Heart right ventricle (tissue), 16 donors: ENCODE measurements at regions of chr7 and their contacts with region 1.

Region 1: DNA sequence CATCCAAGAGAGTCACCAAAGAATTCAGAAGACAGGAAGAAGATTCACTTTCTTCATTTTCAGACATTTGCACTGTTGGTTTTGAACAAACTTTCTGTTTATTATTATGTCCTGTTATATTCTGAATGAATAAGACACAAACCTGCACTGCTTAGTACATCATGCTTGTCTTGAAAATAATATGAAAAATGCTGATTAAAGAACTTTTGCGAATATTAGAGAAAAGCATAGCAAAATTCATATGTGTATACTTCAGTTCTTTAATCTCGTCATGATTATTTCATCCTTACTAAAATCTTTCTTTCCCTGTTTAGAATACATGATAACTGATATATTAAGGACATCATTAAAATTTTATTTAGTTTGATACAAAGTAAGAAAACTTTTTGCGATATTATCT is 504.1 kb downstream of the POM121L12 start:
- DNase-seq: no peak
- ATAC-seq: no peak
- H3K4me3 ChIP-seq: no peak overlapping the region
- H3K27ac ChIP-seq: no peak overlapping the region
- H3K4me1 ChIP-seq: no peaks in the 10 kb centered on the region
- H3K27me3 ChIP-seq: no peaks in the 10 kb centered on the region
- CTCF ChIP-seq: no peak

Region 2: DNA sequence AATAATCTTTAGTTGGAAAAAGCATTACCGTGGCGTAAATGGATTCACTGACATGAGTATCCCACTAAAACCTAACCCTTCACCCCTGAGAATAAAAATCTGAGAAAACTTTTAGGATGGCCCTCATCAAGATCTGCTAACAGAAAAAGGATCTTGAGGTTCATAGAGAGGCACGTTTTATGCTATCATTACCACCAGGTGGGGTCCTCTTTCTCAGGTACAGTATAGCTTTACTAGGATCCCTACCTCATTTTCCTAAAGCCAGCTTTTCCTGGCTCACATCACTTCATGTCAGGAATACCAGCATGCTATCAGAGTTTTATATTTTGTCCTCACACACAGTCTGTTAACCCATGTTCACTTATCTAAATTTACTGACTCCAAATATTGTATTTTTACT is 330.4 kb before region 1 on chr7:
- intact Hi-C with region 1: no loop called
- DNase-seq: no peak
- ATAC-seq: no peak
- H3K4me3 ChIP-seq: no peak overlapping the region
- H3K27ac ChIP-seq: no peak overlapping the region
- H3K4me1 ChIP-seq: no peaks in the 10 kb centered on the region
- H3K27me3 ChIP-seq: no peaks in the 10 kb centered on the region
- CTCF ChIP-seq: no peak

Region 3: GRCh38 chr7:53470336-53470970 is 69.1 kb before region 1 on chr7:
- intact Hi-C with region 1: loop called in 1 of 10 experiments (anchors 10 kb)
- DNase-seq: no peak
- ATAC-seq: no peak
- H3K4me3 ChIP-seq: no peak overlapping the region
- H3K27ac ChIP-seq: no peak overlapping the region
- H3K4me1 ChIP-seq: no peaks in the 10 kb centered on the region
- H3K27me3 ChIP-seq: no peaks in the 10 kb centered on the region
- CTCF ChIP-seq: no peak

Region 4: GRCh38 chr7:53521601-53522184 is 17.9 kb before region 1 on chr7:
- intact Hi-C with region 1: no loop called
- DNase-seq: no peak
- ATAC-seq: no peak
- H3K4me3 ChIP-seq: no peak overlapping the region
- H3K27ac ChIP-seq: no peak overlapping the region
- H3K4me1 ChIP-seq: no peaks in the 10 kb centered on the region
- H3K27me3 ChIP-seq: no peaks in the 10 kb centered on the region
- CTCF ChIP-seq: no peak